Uterus (tissue), 4 donors: ENCODE measurements at regions of chr7 and their contacts with region 1.

Region 1: DNA sequence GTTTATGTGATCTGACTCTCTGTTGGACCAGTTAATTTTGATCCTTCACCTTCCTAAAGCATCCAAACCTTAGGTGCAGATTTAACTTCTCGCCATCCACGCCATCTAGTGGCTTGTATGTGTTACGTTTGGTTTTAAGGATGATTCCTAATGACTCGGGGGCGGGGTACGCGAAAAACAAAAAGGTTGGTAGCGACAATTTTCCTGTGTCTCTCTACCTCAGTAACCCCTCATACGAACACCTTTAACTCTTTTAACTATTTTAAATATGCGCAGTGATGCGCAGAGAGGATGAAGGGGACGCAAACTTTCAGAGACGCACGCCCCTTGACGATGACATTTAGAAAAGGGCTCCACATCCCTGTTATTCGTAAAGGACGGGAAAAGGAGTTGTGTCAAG is 714 bp upstream of the KCND2 start:
- DNase-seq: peak; percentile 27 to 42
- H3K4me3 ChIP-seq: peak overlapping the region; percentile 53 to 55
- H3K27ac ChIP-seq: peak overlapping the region; percentile 62 to 72
- H3K4me1 ChIP-seq: no peaks in the 10 kb centered on the region
- H3K27me3 ChIP-seq: no peaks in the 10 kb centered on the region
- CTCF ChIP-seq: peak; percentile 62 to 69 (median 66)
- POLR2A ChIP-seq: no peak

Region 2: DNA sequence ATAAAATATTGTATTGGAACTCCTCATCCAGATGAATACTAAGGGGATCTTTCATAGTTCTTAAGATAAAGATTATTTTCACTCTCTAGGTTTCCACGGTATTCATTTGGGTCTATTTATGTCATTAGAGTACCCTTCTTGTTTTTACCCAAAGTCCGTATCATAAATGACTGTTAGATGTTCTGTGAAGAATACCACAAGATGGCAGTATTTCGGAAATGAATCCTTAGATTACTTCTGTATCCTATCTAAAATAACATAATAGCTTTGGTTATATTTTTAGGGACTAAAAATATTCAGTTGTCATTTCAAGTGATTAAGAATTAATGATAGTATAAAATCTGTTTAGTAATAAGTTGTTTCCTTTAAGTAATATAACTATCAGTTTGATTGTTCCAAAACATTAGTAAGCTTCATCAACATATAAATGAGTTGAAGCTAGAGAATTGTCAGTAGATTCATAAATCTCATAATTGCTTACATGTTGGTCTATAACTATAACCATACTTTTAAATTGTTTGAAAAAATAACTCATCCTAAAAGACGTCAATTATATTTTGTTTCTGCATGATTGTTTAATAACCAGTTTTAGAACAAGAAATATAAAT is 336.7 kb before region 1 on chr7:
- intact Hi-C with region 1: loop called (anchors 5 kb)
- DNase-seq: no peak
- H3K4me3 ChIP-seq: no peak overlapping the region
- H3K27ac ChIP-seq: no peak overlapping the region
- H3K4me1 ChIP-seq: no peaks in the 10 kb centered on the region
- H3K27me3 ChIP-seq: no peaks in the 10 kb centered on the region
- CTCF ChIP-seq: peak; percentile 42 to 59 (median 48)
- POLR2A ChIP-seq: no peak